ENCODE measurements at regions of chr13 and their contacts with region 1.

Region 1: DNA sequence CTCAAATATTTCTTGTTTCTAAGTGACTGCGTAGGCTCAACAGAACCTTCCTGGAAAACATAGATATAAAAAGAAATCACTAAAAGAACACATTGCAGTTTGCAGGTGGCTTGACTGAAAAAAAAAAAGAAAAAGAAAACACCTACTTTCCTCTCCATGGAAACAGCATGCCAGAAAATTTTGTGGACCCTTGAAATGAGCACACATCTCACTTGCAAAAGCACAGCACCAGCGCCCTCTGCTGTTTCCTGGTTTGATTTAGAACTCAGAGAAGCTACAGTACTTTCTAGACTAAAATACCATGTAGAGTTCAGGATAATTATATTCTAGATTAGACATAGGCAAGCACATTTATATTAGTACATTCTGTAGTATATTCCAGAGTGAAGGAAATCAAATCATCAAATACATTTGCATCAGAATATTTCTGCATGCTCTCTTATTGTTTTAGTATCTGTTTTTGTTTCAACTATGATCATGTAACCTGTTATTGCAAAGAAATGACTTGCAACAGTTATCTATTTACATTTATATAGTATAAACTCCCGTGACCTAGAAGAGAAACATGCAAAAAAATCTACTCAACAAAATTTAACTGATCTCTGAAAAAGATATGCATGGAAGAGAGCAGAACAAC is 22.3 kb upstream of the XPO4 start:
- DNase-seq: peak; percentile 45
- H3K4me3 ChIP-seq: no peak overlapping the region
- H3K27ac ChIP-seq: no peak overlapping the region
- H3K4me1 ChIP-seq: no peaks in the 10 kb centered on the region
- H3K27me3 ChIP-seq: no peaks in the 10 kb centered on the region
- CTCF ChIP-seq: peak; percentile 80 to 84

Region 2: GRCh38 chr13:20182231-20182846 is 742.5 kb before region 1 on chr13:
- CTCF ChIA-PET with region 1: no interaction called
- dilution Hi-C with region 1: loop called (anchors 25 kb)
- in situ Hi-C with region 1: loop called (anchors 25 kb)
- intact Hi-C with region 1: loop called (anchors 1 kb)
- DNase-seq: peak; percentile 54
- H3K4me3 ChIP-seq: no peak overlapping the region
- H3K27ac ChIP-seq: no peak overlapping the region
- H3K4me1 ChIP-seq: peaks cover 9% of the 10 kb centered on the region
- H3K27me3 ChIP-seq: no peaks in the 10 kb centered on the region
- CTCF ChIP-seq: peak; percentile 90

Region 3: GRCh38 chr13:20495082-20496023 is 429.5 kb before region 1 on chr13:
- CTCF ChIA-PET with region 1: no interaction called
- dilution Hi-C with region 1: no loop called
- in situ Hi-C with region 1: loop called (anchors 10 kb)
- intact Hi-C with region 1: loop called (anchors 1 kb)
- DNase-seq: peak; percentile 56
- H3K4me3 ChIP-seq: no peak overlapping the region
- H3K27ac ChIP-seq: no peak overlapping the region
- H3K4me1 ChIP-seq: peaks cover 10% of the 10 kb centered on the region
- H3K27me3 ChIP-seq: no peaks in the 10 kb centered on the region
- CTCF ChIP-seq: peak; percentile 91 to 98

Region 4: DNA sequence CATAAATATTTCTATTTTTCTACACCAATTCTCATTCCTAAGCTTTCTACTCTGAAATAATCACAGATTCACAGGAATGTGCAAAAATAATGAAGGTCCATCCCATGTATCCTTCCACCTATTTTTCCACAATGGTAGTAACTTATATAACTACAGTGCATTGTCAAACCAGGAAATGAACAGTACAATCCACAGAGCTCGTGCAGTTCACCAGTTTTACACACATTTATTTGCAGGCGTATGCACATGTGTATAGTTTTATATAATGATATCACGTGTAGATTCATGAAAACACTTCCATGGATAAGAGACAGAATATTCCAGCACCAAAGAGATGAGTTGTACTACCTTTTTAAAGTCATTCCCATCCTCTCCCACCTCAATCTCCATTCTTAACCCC is 164.0 kb before region 1 on chr13:
- CTCF ChIA-PET with region 1: no interaction called
- dilution Hi-C with region 1: no loop called
- in situ Hi-C with region 1: no loop called
- intact Hi-C with region 1: no loop called
- DNase-seq: no peak
- H3K4me3 ChIP-seq: no peak overlapping the region
- H3K27ac ChIP-seq: no peak overlapping the region
- H3K4me1 ChIP-seq: no peaks in the 10 kb centered on the region
- H3K27me3 ChIP-seq: no peaks in the 10 kb centered on the region
- CTCF ChIP-seq: no peak

Region 5: GRCh38 chr13:20828539-20829364 is 96.1 kb before region 1 on chr13:
- CTCF ChIA-PET with region 1: interaction called, 11 read pairs
- dilution Hi-C with region 1: no loop called
- in situ Hi-C with region 1: no loop called
- intact Hi-C with region 1: no loop called
- DNase-seq: peak; percentile 45
- H3K4me3 ChIP-seq: peak overlapping the region; percentile 26 to 42 (median 33)
- H3K27ac ChIP-seq: peak overlapping the region; percentile 4
- H3K4me1 ChIP-seq: no peaks in the 10 kb centered on the region
- H3K27me3 ChIP-seq: no peaks in the 10 kb centered on the region
- CTCF ChIP-seq: peak; percentile 67 to 83

Region 6: GRCh38 chr13:21219036-21219381 is 294.1 kb after region 1 on chr13:
- CTCF ChIA-PET with region 1: interaction called, 10 read pairs
- dilution Hi-C with region 1: no loop called
- in situ Hi-C with region 1: no loop called
- intact Hi-C with region 1: no loop called
- DNase-seq: no peak
- H3K4me3 ChIP-seq: no peak overlapping the region
- H3K27ac ChIP-seq: no peak overlapping the region
- H3K4me1 ChIP-seq: no peaks in the 10 kb centered on the region
- H3K27me3 ChIP-seq: no peaks in the 10 kb centered on the region
- CTCF ChIP-seq: no peak

Measured in mammary epithelial cell (primary cell).